Heart left ventricle (tissue), 16 donors: ENCODE measurements at regions of chr3 and their contacts with region 1.

Region 1: GRCh38 chr3:152160350-152161011 is 108.2 kb upstream of the MBNL1 start:
- DNase-seq: no peak
- ATAC-seq: no peak
- H3K4me3 ChIP-seq: no peak overlapping the region
- H3K27ac ChIP-seq: peak overlapping the region in 1 of 12 donors; percentile 32
- H3K4me1 ChIP-seq: no peaks in the 10 kb centered on the region
- H3K27me3 ChIP-seq: no peaks in the 10 kb centered on the region
- CTCF ChIP-seq: no peak
- POLR2A ChIP-seq: no peak

Region 2: GRCh38 chr3:152097770-152098169 is 62.7 kb before region 1 on chr3:
- intact Hi-C with region 1: loop called in 1 of 10 experiments (anchors 5 kb)
- DNase-seq: no peak
- ATAC-seq: no peak
- H3K4me3 ChIP-seq: no peak overlapping the region
- H3K27ac ChIP-seq: peak overlapping the region in 1 of 12 donors; percentile 70
- H3K4me1 ChIP-seq: no peaks in the 10 kb centered on the region
- H3K27me3 ChIP-seq: no peaks in the 10 kb centered on the region
- CTCF ChIP-seq: no peak
- POLR2A ChIP-seq: no peak